CD4-positive, alpha-beta memory T cell (primary cell): ENCODE measurements at regions of chr3 and their contacts with region 1.

Region 1: DNA sequence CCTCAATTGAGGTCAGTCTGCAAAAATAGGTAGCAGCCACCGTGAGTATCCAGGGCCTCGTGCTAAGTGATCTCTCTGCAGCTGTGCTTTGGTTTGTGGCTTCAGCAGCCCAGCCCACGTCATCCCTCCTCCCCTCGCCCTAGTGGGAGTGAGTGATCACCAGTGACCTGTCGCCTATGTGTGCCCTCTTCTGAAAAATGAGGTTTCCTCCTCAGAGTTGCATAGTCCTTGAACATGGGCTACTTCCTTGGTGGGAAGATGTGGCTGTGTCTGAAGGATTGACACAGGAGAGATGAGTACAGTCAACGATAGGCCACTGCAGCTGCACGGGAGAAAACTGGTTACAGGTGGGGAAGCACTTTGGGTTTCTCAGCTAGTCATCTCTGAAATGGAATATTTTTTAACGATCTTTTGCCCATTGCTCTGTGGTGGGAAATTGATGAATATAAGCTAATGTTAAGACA is 144.8 kb upstream of the BHLHE40 start:
- DNase-seq: peak; percentile 68 to 84 (median 75)
- H3K4me3 ChIP-seq: no peak overlapping the region
- H3K4me3 Mint-ChIP-seq: peak overlapping the region; percentile 45 to 81 (median 69)
- H3K27ac ChIP-seq: peak overlapping the region; percentile 42
- H3K27ac Mint-ChIP-seq: peak overlapping the region; percentile 83 to 97 (median 93)
- H3K4me1 ChIP-seq: peaks cover 84% of the 10 kb centered on the region
- H3K4me1 Mint-ChIP-seq: peaks cover 63 to 79% (median 74%) of the 10 kb centered on the region in 4 donors
- H3K27me3 ChIP-seq: no peaks in the 10 kb centered on the region
- H3K27me3 Mint-ChIP-seq: peaks cover 0 to 3% of the 10 kb centered on the region in 2 donors

Region 2: GRCh38 chr3:4814305-4814903 is 20.0 kb before region 1 on chr3:
- CTCF ChIA-PET with region 1: no interaction called
- POLR2A ChIA-PET with region 1: no interaction called
- intact Hi-C with region 1: no loop called
- DNase-seq: no peak
- H3K4me3 ChIP-seq: no peak overlapping the region
- H3K4me3 Mint-ChIP-seq: no peak overlapping the region
- H3K27ac ChIP-seq: no peak overlapping the region
- H3K27ac Mint-ChIP-seq: peak overlapping the region in 2 of 7 donors; percentile 14 to 44
- H3K4me1 ChIP-seq: no peaks in the 10 kb centered on the region
- H3K4me1 Mint-ChIP-seq: peaks cover 0 to 3% (median 1%) of the 10 kb centered on the region in 4 donors
- H3K27me3 ChIP-seq: no peaks in the 10 kb centered on the region
- H3K27me3 Mint-ChIP-seq: no peaks in the 10 kb centered on the region

Region 3: DNA sequence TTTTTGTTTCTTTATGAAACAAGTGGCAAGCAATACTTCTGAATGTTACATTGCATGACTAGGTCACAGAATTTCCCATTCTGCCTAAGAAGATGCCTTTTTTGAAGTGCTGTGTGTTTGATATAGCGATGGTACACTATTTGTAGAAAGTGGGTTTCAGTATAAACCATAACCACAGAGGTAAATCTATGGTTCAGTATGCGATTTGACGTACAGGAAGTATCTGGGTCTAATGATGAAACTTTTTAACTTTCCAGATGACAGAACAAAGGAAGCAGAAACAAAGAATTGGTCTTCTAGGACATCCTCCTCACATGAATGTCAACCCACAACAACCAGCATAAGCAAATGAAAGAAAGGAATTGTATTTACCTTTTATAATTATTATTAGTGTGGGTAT is 11.4 kb after region 1 on chr3:
- CTCF ChIA-PET with region 1: interaction called, 13 read pairs
- POLR2A ChIA-PET with region 1: interaction called, 42 read pairs
- intact Hi-C with region 1: loop called (anchors 1 kb)
- DNase-seq: peak in 4 of 5 donors; percentile 73 to 84 (median 76)
- H3K4me3 ChIP-seq: peak overlapping the region in 1 of 2 donors; percentile 27
- H3K4me3 Mint-ChIP-seq: peak overlapping the region in 7 of 8 donors; percentile 5 to 62 (median 35)
- H3K27ac ChIP-seq: peak overlapping the region; percentile 67
- H3K27ac Mint-ChIP-seq: peak overlapping the region; percentile 50 to 98 (median 94)
- H3K4me1 ChIP-seq: peaks cover 96% of the 10 kb centered on the region
- H3K4me1 Mint-ChIP-seq: peaks cover 70 to 93% (median 83%) of the 10 kb centered on the region in 4 donors
- H3K27me3 ChIP-seq: no peaks in the 10 kb centered on the region
- H3K27me3 Mint-ChIP-seq: no peaks in the 10 kb centered on the region

Region 4: GRCh38 chr3:4906107-4906621 is 71.7 kb after region 1 on chr3:
- CTCF ChIA-PET with region 1: interaction called, 3 read pairs
- POLR2A ChIA-PET with region 1: interaction called, 5 read pairs
- intact Hi-C with region 1: loop called (anchors 2 kb)
- DNase-seq: peak in 1 of 5 donors; percentile 46
- H3K4me3 ChIP-seq: no peak overlapping the region
- H3K4me3 Mint-ChIP-seq: peak overlapping the region in 3 of 8 donors; percentile 10 to 72 (median 36)
- H3K27ac ChIP-seq: peak overlapping the region; percentile 22
- H3K27ac Mint-ChIP-seq: peak overlapping the region; percentile 19 to 92 (median 76)
- H3K4me1 ChIP-seq: peaks cover 57% of the 10 kb centered on the region
- H3K4me1 Mint-ChIP-seq: peaks cover 39 to 73% (median 54%) of the 10 kb centered on the region in 4 donors
- H3K27me3 ChIP-seq: no peaks in the 10 kb centered on the region
- H3K27me3 Mint-ChIP-seq: no peaks in the 10 kb centered on the region

Region 5: GRCh38 chr3:5187156-5187919 is 352.9 kb after region 1 on chr3 and contains the start of gene EDEM1:
- CTCF ChIA-PET with region 1: no interaction called
- POLR2A ChIA-PET with region 1: no interaction called
- intact Hi-C with region 1: loop called (anchors 10 kb)
- DNase-seq: peak; percentile 92 to 94 (median 93)
- H3K4me3 ChIP-seq: peak within 1 kb of the TSS; percentile 80 to 85
- H3K4me3 Mint-ChIP-seq: peak within 1 kb of the TSS; percentile 93 to 100 (median 98)
- H3K27ac ChIP-seq: peak within 1 kb of the TSS; percentile 87
- H3K27ac Mint-ChIP-seq: peak within 1 kb of the TSS; percentile 98 to 99 (median 99)
- H3K4me1 ChIP-seq: peaks cover 16% of the 10 kb centered on the region
- H3K4me1 Mint-ChIP-seq: peaks cover 26 to 46% (median 32%) of the 10 kb centered on the region in 4 donors
- H3K27me3 ChIP-seq: no peaks in the 10 kb centered on the region
- H3K27me3 Mint-ChIP-seq: no peaks in the 10 kb centered on the region
- total RNA-seq, gene EDEM1: 146 to 153 TPM